GM13976 (cell line): ENCODE measurements at regions of chr11 and their contacts with region 1.

Region 1: DNA sequence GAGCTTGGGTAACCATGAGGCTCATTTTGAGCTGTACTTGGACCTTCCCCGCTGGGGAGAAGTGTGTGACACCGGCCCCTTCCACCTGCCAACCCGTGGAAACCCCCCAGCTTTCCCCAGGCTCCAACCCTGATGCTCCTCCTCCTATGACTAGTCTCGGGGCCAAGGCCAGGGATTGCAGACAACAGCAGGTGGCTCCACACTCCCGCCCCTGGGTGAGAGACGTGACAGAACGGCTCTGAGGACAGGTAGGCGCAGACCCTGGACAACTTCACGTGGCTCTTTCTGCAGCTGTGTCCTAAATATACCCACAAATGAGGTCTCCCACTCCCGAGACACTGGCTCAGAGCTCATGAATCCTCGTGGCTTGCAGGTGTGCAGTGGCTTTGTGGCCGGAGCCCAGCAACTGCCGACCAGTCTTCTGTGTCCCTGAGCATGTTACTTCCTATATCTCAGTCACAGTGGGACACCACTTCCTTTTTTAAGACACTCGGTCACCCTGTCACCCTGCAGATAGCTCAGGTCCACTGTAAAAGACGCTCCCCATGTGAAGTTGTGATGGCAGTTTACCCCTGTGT is 55.2 kb downstream of the NECTIN1 start:
- DNase-seq: peak; percentile 89
- CTCF ChIP-seq: peak; percentile 77

Region 2: GRCh38 chr11:119729581-119730346 is 55.9 kb after region 1 on chr11:
- in situ Hi-C with region 1: loop called (anchors 10 kb)
- DNase-seq: no peak
- CTCF ChIP-seq: no peak